ENCODE measurements at regions of chr7 and their contacts with region 1.

Region 1: GRCh38 chr7:124009321-124009720 is 23.5 kb downstream of the TMEM229A start:
- DNase-seq: no peak
- H3K4me3 ChIP-seq: no peak overlapping the region
- CTCF ChIP-seq: no peak

Region 2: DNA sequence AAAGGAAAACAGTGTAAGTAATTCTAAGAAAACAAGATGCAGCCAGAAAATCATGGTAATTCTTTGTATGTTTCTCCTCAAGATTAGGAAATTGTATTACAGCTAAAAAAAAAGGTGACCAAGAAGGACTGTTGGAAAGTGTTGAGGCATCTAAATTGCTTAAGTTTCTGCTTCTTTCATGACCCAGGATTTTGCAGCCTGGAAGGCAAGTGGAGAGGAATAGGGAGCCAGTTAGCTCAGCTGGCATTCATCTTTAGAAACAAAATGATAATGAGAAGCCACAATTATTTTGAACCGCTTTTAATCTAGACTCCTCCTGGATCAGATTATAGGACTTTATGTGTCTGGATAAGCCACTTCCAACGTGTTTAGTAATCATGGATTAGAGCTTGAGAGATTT is 80.3 kb after region 1 on chr7:
- in situ Hi-C with region 1: loop called (anchors 10 kb)
- DNase-seq: no peak
- H3K4me3 ChIP-seq: no peak overlapping the region
- CTCF ChIP-seq: no peak

Measured in astrocyte of the cerebellum (primary cell).